Dendritic cell treated with granulocyte-macrophage colony-stimulating factor and Interleukin-4, amounts not matched to agents 40 ng/mL and 50 ng/mL, for 4 days (primary cell): ENCODE measurements at regions of chr20 and their contacts with region 1.

Region 1: DNA sequence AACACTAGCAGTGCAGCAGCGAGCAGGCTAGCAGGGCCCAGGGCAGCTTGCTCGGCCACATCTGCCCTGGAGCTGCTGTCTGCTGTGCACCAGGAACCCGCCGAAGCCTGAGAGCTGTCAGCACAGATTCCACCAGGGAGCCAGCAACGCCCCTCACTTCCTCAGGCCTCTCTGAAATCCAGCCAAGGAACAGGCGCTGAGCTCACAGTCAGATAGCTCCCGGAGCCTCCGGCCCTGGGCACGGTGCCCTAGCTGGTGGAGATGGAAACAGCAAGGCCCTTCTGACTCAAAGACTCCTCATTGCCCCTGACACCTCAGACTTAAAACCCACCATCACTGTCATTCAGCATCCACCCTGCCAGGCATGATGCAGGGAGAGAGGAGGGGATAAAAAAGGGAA is 839.4 kb downstream of the MAFB start:
- H3K4me3 Mint-ChIP-seq: no peak overlapping the region
- H3K27ac Mint-ChIP-seq: no peak overlapping the region
- H3K4me1 Mint-ChIP-seq: no peaks in the 10 kb centered on the region
- H3K27me3 Mint-ChIP-seq: peaks cover 2% of the 10 kb centered on the region

Region 2: GRCh38 chr20:39789411-39789810 is 60.3 kb before region 1 on chr20:
- intact Hi-C with region 1: loop called (anchors 10 kb)
- H3K4me3 Mint-ChIP-seq: no peak overlapping the region
- H3K27ac Mint-ChIP-seq: no peak overlapping the region
- H3K4me1 Mint-ChIP-seq: no peaks in the 10 kb centered on the region
- H3K27me3 Mint-ChIP-seq: no peaks in the 10 kb centered on the region

Region 3: DNA sequence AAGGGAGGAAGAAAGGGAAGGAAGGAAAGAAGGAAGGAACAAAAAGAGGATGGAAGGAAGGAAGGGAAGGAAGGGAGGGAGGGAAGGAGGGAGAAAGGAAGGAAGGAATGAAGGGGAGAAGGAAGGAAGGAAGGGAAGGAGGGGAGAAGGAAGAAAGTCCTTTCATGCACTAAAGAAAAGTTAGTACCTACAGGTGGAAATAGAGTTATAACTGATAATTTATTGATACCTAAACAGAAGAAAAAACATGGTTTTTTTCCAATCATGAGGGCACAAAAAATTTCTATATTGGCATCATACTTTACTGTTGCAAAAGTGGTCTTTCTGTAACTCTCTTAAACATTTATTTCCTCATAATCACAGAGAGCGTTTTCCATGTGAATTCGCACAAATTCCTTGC is 179.9 kb after region 1 on chr20:
- intact Hi-C with region 1: no loop called
- H3K4me3 Mint-ChIP-seq: no peak overlapping the region
- H3K27ac Mint-ChIP-seq: no peak overlapping the region
- H3K4me1 Mint-ChIP-seq: peaks cover 5% of the 10 kb centered on the region
- H3K27me3 Mint-ChIP-seq: peaks cover 3% of the 10 kb centered on the region